AG04450 (cell line): ENCODE measurements at regions of chr4 and their contacts with region 1.

Region 1: DNA sequence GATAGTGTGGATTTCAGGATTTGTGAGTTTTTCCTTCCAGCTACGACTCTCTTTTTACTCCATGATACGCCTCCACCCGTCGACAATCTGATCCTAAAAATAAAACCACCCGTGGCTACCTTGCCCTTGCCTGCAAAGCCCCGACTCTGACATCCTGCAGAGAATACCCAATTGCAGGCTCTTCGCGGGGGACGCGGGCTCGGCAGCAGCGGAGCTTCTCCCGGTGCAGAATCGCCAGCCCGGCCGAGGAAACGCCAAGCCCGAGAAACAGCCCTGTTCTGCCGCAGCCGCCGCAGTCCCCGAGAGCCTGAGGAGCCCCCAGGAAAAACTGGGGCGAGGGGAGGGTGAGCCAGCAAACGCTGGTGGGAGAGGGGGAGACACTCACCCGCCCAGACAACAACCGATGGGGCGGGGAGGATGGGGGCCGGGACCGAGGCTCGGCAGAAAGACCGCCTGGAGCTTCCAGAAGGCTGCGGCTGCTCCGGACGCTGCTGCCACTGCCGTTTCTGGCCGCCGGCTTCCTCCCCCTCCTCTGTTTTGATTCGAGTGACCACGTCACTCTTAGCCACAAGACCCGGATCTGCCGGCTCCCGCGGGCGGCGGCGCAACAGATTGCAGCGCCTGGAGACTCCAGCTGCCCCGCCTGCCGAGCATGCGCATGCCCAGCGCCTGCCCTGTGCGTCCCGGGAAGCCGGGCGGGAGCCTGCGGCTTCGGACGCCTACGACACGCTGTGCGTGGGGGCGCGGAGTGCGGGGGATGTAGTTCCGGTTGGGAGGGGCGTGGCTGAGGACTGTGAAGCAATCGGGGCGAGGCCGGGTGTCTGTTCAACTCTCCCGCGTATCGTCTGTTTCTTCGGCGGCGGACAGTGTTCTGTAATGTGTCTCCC is at the start of gene SMIM14:
- DNase-seq: peak; percentile 96
- H3K4me3 ChIP-seq: peak within 1 kb of the TSS; percentile 70
- H3K27ac ChIP-seq: peak within 1 kb of the TSS; percentile 93
- H3K27me3 ChIP-seq: no peaks in the 10 kb centered on the region
- CTCF ChIP-seq: no peak
- polyA plus RNA-seq, gene SMIM14: 48.0 and 53.7 TPM in 2 replicates

Region 2: GRCh38 chr4:39559626-39560025 is 79.0 kb before region 1 on chr4:
- CTCF ChIA-PET with region 1: no interaction called
- POLR2A ChIA-PET with region 1: interaction called, 11 read pairs
- DNase-seq: no peak
- H3K4me3 ChIP-seq: no peak overlapping the region
- H3K27ac ChIP-seq: no peak overlapping the region
- H3K27me3 ChIP-seq: no peaks in the 10 kb centered on the region
- CTCF ChIP-seq: no peak

Region 3: DNA sequence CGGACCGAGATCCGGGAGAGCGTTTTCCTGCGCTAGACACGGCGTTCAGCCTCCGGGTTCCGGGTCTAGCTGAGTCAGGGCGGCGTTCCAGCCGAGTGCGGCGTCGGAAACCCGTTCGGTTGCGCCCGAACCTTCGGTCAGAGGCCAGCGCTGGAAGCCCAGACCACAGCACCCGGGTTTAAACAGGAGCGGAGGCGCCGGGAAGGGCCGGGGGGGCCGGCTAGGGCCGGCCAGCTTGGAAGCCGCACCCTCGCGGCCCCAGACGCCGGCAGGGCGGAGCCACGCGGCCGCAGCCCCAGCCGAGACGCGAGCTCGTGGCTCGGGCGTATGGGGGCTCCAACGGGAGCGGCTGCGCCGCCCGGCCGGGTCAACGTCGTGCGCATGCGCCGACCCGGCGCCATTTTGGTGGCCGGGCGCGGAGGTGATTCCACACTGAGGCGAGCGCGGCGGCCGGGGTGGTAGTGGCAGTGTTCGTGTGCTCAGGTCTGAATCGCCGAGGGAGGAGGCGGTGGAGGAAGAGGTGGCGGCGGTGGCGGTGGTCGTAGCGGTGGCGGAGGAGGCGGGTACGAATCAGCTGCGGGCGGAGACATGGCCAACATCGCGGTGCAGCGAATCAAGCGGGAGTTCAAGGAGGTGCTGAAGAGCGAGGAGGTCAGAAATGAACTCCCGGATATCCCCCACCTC is 59.3 kb after region 1 on chr4 and contains the start of gene UBE2K:
- CTCF ChIA-PET with region 1: interaction called, 3 read pairs
- POLR2A ChIA-PET with region 1: interaction called, 11 read pairs
- DNase-seq: no peak
- H3K4me3 ChIP-seq: peak within 1 kb of the TSS; percentile 96
- H3K27ac ChIP-seq: peak within 1 kb of the TSS; percentile 81
- H3K27me3 ChIP-seq: no peaks in the 10 kb centered on the region
- CTCF ChIP-seq: no peak
- polyA plus RNA-seq, gene UBE2K: 79.3 and 101 TPM in 2 replicates